Activated B cell treated with CpG ODN at 0.5 μM for 24 hours (primary cell): ENCODE measurements at regions of chr3 and their contacts with region 1.

Region 1: DNA sequence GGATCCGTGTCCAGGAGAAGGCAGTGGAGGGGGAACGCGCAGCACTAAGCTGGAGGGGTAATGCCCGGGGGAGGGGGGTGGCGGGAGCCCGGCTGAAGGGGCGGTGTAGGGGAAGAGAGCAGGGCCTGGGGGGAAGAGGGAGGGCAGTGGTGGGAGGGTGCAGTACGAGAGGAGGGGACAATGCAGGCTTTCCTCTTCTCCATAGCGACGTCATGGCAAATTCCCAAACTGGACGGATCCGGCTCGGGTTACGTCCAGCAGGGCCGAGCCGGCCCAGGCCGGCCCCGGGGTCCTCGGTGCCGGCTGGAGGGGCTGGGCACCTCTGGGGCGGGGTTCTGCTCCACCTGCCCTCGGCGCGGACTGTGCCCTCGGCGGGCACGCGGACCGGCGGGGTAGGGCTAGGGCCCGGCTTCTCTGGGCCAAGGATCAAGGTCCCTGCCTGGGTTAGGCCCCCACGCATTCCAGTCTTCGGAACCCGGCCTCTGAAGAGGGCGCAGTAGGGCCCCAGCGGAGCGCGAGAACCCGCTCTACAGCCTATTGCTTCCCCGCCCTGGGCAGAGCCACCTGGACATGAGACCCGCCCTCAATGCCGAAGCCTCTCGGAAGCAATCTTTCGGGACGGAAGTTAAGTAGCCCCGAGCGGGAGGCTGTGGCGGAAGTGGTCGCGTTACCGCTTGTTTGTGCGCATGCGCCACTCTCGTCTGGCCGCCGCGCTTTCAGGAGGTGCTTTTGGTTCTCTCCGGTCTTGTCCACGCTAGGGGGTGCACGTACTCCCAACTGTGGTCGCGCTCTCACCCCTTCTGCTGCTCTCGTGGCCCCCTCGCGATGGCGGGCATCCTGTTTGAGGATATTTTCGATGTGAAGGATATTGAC is 1.4 kb downstream of the POLR2H start:
- DNase-seq: peak; percentile 93
- ATAC-seq: peak; percentile 86
- H3K4me3 Mint-ChIP-seq: peak overlapping the region; percentile 96
- H3K27ac Mint-ChIP-seq: peak overlapping the region; percentile 95
- H3K4me1 Mint-ChIP-seq: peaks cover 25% of the 10 kb centered on the region
- H3K27me3 Mint-ChIP-seq: no peaks in the 10 kb centered on the region
- CTCF ChIP-seq: no peak

Region 2: DNA sequence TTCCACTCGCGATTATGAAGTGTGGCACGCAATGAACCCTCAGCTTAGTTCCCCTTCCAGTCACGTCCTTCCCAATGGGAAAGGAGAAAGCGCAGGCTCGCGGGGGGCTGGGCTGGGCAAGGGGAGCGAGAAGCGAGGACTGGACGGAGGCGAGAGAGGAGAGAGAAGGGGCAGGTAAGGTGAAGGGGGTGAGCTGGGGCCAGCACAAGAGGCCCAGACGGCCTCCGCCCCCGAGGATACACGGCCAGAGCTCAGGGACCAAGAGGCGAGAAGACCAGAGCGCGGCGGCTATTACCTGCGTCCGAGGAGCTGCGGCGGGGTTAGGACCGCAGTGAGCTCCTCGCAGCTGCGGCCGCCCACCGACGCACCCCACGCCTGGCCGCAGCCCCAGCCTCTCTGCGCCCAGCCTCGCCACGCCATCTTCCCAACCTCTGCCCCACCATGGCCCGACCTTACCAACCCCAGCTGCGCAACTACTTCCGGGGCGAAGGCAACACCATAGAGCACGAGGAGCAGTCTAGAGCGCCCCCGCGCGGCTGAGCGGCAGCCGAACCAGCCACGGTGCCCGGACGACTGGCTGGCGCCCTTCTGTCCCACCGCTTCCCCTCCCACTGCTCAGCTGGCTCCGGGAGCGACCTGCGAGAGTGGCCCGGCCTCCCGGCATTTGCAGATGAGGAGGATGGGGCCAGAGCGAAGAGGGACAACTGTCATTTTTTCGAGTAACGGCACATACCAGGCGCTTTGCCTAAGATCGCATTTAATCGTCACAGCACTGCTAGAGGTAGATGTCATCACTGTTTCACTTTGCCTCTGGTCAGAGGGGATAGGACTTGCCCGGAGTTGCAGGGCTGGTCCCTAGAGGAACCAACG is 478.2 kb before region 1 on chr3 and contains the start of gene PARL:
- CTCF ChIA-PET with region 1: no interaction called
- POLR2A ChIA-PET with region 1: no interaction called
- intact Hi-C with region 1: loop called (anchors 1 kb)
- DNase-seq: peak; percentile 94
- ATAC-seq: peak; percentile 99
- H3K4me3 Mint-ChIP-seq: peak within 1 kb of the TSS; percentile 98
- H3K27ac Mint-ChIP-seq: peak within 1 kb of the TSS; percentile 85
- H3K4me1 Mint-ChIP-seq: peaks cover 36% of the 10 kb centered on the region
- H3K27me3 Mint-ChIP-seq: peaks cover 2% of the 10 kb centered on the region
- CTCF ChIP-seq: no peak
- total RNA-seq, gene PARL: 57.6 and 57.8 TPM in 2 replicates

Region 3: GRCh38 chr3:184017672-184018423 is 345.1 kb before region 1 on chr3 and contains the start of gene ABCC5:
- CTCF ChIA-PET with region 1: no interaction called
- POLR2A ChIA-PET with region 1: no interaction called
- intact Hi-C with region 1: loop called (anchors 2 kb)
- DNase-seq: peak; percentile 70
- ATAC-seq: peak; percentile 96
- H3K4me3 Mint-ChIP-seq: peak within 1 kb of the TSS; percentile 100
- H3K27ac Mint-ChIP-seq: peak within 1 kb of the TSS; percentile 84
- H3K4me1 Mint-ChIP-seq: peaks cover 13% of the 10 kb centered on the region
- H3K27me3 Mint-ChIP-seq: peaks cover 12% of the 10 kb centered on the region
- CTCF ChIP-seq: peak; percentile 7
- total RNA-seq, gene ABCC5: 10.6 and 11.1 TPM in 2 replicates

Region 4: GRCh38 chr3:184314363-184314699 is 48.6 kb before region 1 on chr3 and contains the start of gene EIF4G1:
- CTCF ChIA-PET with region 1: no interaction called
- POLR2A ChIA-PET with region 1: interaction called, 5 read pairs
- intact Hi-C with region 1: loop called (anchors 1 kb)
- DNase-seq: peak; percentile 92
- ATAC-seq: peak; percentile 86
- H3K4me3 Mint-ChIP-seq: peak within 1 kb of the TSS; percentile 86
- H3K27ac Mint-ChIP-seq: peak within 1 kb of the TSS; percentile 88
- H3K4me1 Mint-ChIP-seq: peaks cover 28% of the 10 kb centered on the region
- H3K27me3 Mint-ChIP-seq: no peaks in the 10 kb centered on the region
- CTCF ChIP-seq: no peak
- total RNA-seq, gene EIF4G1: 292 and 319 TPM in 2 replicates

Region 5: DNA sequence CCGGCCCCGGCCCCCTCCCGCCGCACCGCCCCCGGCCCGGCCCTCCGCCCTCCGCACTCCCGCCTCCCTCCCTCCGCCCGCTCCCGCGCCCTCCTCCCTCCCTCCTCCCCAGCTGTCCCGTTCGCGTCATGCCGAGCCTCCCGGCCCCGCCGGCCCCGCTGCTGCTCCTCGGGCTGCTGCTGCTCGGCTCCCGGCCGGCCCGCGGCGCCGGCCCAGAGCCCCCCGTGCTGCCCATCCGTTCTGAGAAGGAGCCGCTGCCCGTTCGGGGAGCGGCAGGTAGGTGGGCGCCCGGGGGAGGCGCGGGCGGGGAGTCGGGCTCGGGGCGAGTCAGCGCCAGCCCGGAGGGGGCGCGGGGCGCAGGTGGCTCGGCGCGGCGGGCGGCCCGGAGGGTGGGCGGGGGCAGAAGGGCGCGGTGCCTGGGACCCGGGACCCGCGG is 17.3 kb after region 1 on chr3:
- CTCF ChIA-PET with region 1: no interaction called
- POLR2A ChIA-PET with region 1: no interaction called
- intact Hi-C with region 1: no loop called
- DNase-seq: peak; percentile 25
- ATAC-seq: peak; percentile 35
- H3K4me3 Mint-ChIP-seq: no peak overlapping the region
- H3K27ac Mint-ChIP-seq: no peak overlapping the region
- H3K4me1 Mint-ChIP-seq: peaks cover 17% of the 10 kb centered on the region
- H3K27me3 Mint-ChIP-seq: peaks cover 65% of the 10 kb centered on the region
- CTCF ChIP-seq: no peak

Region 6: GRCh38 chr3:184417619-184418327 is 54.9 kb after region 1 on chr3:
- CTCF ChIA-PET with region 1: no interaction called
- POLR2A ChIA-PET with region 1: no interaction called
- intact Hi-C with region 1: no loop called
- DNase-seq: peak; percentile 65
- ATAC-seq: peak; percentile 100
- H3K4me3 Mint-ChIP-seq: no peak overlapping the region
- H3K27ac Mint-ChIP-seq: no peak overlapping the region
- H3K4me1 Mint-ChIP-seq: peaks cover 2% of the 10 kb centered on the region
- H3K27me3 Mint-ChIP-seq: no peaks in the 10 kb centered on the region
- CTCF ChIP-seq: peak; percentile 71

Region 7: DNA sequence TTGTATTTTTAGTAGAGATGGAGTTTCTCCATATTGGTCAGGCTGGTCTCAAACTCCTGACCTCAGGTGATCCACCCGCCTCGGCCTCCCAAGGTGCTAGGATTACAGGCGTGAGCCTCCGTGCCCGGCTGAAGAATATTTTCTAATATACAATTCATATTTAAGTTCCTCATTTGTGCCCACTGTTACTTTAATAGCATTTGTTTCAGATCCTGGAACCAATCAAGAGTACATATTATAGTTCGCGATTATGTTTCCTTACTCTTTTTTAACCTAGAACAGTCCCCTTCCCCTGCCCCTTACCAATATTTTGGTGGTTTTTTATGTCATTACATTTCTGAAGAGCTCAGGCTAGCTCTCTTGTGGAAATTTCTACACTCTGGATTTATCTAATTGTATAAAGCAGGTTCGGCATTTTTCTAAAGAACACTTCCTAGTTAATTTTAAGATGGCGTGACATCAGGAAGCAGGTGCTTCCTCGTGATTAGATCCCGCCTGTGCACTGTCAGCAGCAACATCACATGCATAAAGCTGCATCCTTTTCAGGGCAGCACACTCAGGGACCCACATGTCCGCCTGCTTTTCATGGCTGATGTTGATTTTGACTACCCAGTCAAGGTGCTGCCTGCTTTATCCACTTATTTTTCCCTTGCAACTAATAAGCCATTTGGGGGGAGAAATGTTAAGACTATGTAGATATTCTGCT is 110.0 kb after region 1 on chr3:
- CTCF ChIA-PET with region 1: no interaction called
- POLR2A ChIA-PET with region 1: no interaction called
- intact Hi-C with region 1: loop called (anchors 2 kb)
- DNase-seq: no peak
- ATAC-seq: peak; percentile 88
- H3K4me3 Mint-ChIP-seq: peak overlapping the region; percentile 80
- H3K27ac Mint-ChIP-seq: peak overlapping the region; percentile 94
- H3K4me1 Mint-ChIP-seq: peaks cover 19% of the 10 kb centered on the region
- H3K27me3 Mint-ChIP-seq: peaks cover 8% of the 10 kb centered on the region
- CTCF ChIP-seq: no peak

Region 8: GRCh38 chr3:184711493-184712247 is 348.8 kb after region 1 on chr3 and contains the start of gene MAGEF1:
- CTCF ChIA-PET with region 1: no interaction called
- POLR2A ChIA-PET with region 1: no interaction called
- intact Hi-C with region 1: loop called (anchors 5 kb)
- DNase-seq: peak; percentile 65
- ATAC-seq: peak; percentile 80
- H3K4me3 Mint-ChIP-seq: peak within 1 kb of the TSS; percentile 86
- H3K27ac Mint-ChIP-seq: peak within 1 kb of the TSS; percentile 87
- H3K4me1 Mint-ChIP-seq: peaks cover 30% of the 10 kb centered on the region
- H3K27me3 Mint-ChIP-seq: no peaks in the 10 kb centered on the region
- CTCF ChIP-seq: no peak
- total RNA-seq, gene MAGEF1: 18.5 and 18.7 TPM in 2 replicates

Region 9: DNA sequence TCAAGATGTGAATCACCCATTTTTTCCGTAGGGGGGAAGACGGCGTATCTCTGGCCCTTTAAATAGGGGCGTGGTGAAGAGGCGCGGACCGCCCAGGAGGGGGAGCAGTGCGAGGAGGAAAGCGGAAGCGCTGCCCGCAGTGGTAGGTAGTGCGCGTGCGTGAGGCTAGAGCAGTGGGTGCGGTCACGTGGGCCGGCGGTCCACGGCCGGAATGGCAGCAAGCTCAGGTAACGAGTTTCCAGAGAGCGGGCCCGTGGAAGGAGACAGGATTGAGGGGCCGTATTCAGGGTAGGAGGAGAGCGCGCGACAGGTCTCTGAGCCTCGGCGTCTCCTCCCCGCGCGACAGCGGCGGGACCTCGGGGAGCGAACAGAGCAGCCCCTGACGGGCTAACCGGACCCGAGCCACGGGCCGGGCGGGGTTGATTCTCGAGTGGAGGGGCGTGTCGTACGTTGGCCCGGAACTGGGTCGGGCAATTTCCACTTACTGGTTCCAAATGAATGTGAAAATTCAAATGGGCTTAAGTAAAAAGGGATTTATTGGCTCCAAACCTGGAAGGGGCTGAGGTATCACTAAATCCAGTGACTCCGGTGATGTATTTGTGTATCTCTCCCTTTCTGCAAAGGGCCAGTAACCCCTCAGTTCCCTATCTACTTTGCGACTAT is 449.2 kb after region 1 on chr3 and contains the start of gene VPS8:
- CTCF ChIA-PET with region 1: no interaction called
- POLR2A ChIA-PET with region 1: interaction called, 4 read pairs
- intact Hi-C with region 1: loop called (anchors 2 kb)
- DNase-seq: peak; percentile 95
- ATAC-seq: peak; percentile 92
- H3K4me3 Mint-ChIP-seq: peak within 1 kb of the TSS; percentile 96
- H3K27ac Mint-ChIP-seq: peak within 1 kb of the TSS; percentile 96
- H3K4me1 Mint-ChIP-seq: peaks cover 24% of the 10 kb centered on the region
- H3K27me3 Mint-ChIP-seq: no peaks in the 10 kb centered on the region
- CTCF ChIP-seq: no peak
- total RNA-seq, gene VPS8: 57.4 and 68.8 TPM in 2 replicates